Naive thymus-derived CD4-positive, alpha-beta T cell (primary cell): ENCODE measurements at regions of chr3 and their contacts with region 1.

Region 1: DNA sequence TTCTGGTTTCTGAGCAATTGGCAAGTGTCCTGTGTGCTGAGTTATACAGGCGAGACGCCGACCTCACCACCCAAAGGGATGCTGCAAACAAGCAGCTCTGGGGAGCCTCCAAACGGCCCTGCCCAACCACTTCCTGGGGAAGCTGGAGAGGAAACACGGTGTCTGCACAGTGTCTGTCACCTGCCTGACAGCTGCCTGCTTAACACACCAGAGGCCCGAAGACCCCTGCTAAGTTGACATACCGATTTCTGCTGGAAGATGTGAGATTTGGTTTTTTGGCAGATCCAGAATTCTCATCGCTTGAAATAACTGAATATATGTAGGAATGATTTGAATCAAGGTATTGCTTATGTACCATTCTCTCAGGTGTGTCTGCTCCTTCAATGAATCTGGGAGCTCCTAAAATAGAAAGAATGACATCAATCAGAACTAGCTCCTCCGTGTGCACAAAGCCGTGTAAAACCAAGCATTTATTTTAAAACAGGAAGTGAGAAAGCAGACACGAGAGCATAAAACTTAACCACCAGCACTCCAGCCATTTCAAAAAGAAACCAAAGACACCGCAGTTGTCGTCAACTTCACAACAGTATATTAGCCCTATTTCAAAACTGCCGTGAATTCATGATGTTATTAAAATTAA is 27.2 kb downstream of the LRRC2 start:
- DNase-seq: peak; percentile 53 to 92 (median 89)
- ATAC-seq: peak; percentile 94
- H3K4me3 ChIP-seq: peak overlapping the region; percentile 27
- H3K4me3 Mint-ChIP-seq: peak overlapping the region; percentile 46 to 86 (median 74)
- H3K27ac ChIP-seq: peak overlapping the region; percentile 68
- H3K27ac Mint-ChIP-seq: peak overlapping the region; percentile 86 to 97 (median 95)
- H3K4me1 ChIP-seq: peaks cover 27 to 43% of the 10 kb centered on the region in 2 donors
- H3K4me1 Mint-ChIP-seq: peaks cover 19 to 74% (median 56%) of the 10 kb centered on the region in 7 donors
- H3K27me3 ChIP-seq: no peaks in the 10 kb centered on the region
- H3K27me3 Mint-ChIP-seq: peaks cover 0 to 31% (median 6%) of the 10 kb centered on the region in 5 donors

Region 2: GRCh38 chr3:45870099-45870498 is 668.8 kb before region 1 on chr3:
- CTCF ChIA-PET with region 1: no interaction called
- POLR2A ChIA-PET with region 1: no interaction called
- intact Hi-C with region 1: loop called in 1 of 2 experiments (anchors 1 kb)
- DNase-seq: peak in 8 of 9 donors; percentile 33 to 92 (median 88)
- ATAC-seq: peak; percentile 96
- H3K4me3 ChIP-seq: no peak overlapping the region
- H3K4me3 Mint-ChIP-seq: peak overlapping the region in 9 of 10 donors; percentile 0 to 74 (median 45)
- H3K27ac ChIP-seq: no peak overlapping the region
- H3K27ac Mint-ChIP-seq: peak overlapping the region in 8 of 9 donors; percentile 5 to 85 (median 44)
- H3K4me1 ChIP-seq: peaks cover 27 to 28% of the 10 kb centered on the region in 2 donors
- H3K4me1 Mint-ChIP-seq: peaks cover 18 to 58% (median 45%) of the 10 kb centered on the region in 7 donors
- H3K27me3 ChIP-seq: no peaks in the 10 kb centered on the region
- H3K27me3 Mint-ChIP-seq: peaks cover 0 to 70% (median 0%) of the 10 kb centered on the region in 5 donors

Region 3: DNA sequence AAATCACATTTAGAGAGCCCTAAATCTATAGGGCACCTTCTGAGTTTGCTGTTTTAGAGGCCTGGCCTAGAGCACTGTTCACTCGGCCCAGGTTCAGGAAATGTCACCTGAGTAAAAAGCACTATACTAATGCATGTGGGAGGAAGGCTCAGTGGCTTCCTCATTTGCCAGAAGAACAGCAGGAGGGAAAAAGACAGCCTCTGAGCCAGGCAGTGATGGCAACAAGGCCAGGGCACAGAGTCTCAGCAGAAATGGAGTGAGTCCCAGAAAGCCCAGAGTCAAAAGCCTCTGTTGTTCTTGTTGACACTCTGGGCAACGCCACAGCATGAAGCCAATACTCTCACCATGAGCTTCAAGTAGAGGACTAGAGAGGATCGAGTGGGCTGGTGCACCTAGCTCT is 100.1 kb before region 1 on chr3:
- CTCF ChIA-PET with region 1: no interaction called
- POLR2A ChIA-PET with region 1: no interaction called
- intact Hi-C with region 1: no loop called
- DNase-seq: no peak
- ATAC-seq: no peak
- H3K4me3 ChIP-seq: no peak overlapping the region
- H3K4me3 Mint-ChIP-seq: no peak overlapping the region
- H3K27ac ChIP-seq: no peak overlapping the region
- H3K27ac Mint-ChIP-seq: peak overlapping the region in 1 of 9 donors; percentile 17
- H3K4me1 ChIP-seq: peaks cover 12 to 13% of the 10 kb centered on the region in 2 donors
- H3K4me1 Mint-ChIP-seq: peaks cover 16 to 42% (median 28%) of the 10 kb centered on the region in 7 donors
- H3K27me3 ChIP-seq: no peaks in the 10 kb centered on the region
- H3K27me3 Mint-ChIP-seq: peaks cover 0 to 14% (median 0%) of the 10 kb centered on the region in 5 donors

Region 4: GRCh38 chr3:46488735-46489361 is 50.1 kb before region 1 on chr3:
- CTCF ChIA-PET with region 1: interaction called, 75 read pairs
- POLR2A ChIA-PET with region 1: interaction called, 21 read pairs
- intact Hi-C with region 1: loop called (anchors 1 kb)
- DNase-seq: peak; percentile 82 to 92 (median 89)
- ATAC-seq: peak; percentile 99
- H3K4me3 ChIP-seq: peak overlapping the region; percentile 54
- H3K4me3 Mint-ChIP-seq: peak overlapping the region; percentile 38 to 82 (median 68)
- H3K27ac ChIP-seq: no peak overlapping the region
- H3K27ac Mint-ChIP-seq: peak overlapping the region in 6 of 9 donors; percentile 7 to 77 (median 56)
- H3K4me1 ChIP-seq: peaks cover 7 to 15% of the 10 kb centered on the region in 2 donors
- H3K4me1 Mint-ChIP-seq: peaks cover 10 to 21% (median 18%) of the 10 kb centered on the region in 7 donors
- H3K27me3 ChIP-seq: no peaks in the 10 kb centered on the region
- H3K27me3 Mint-ChIP-seq: peaks cover 0 to 31% (median 0%) of the 10 kb centered on the region in 5 donors

Region 5: DNA sequence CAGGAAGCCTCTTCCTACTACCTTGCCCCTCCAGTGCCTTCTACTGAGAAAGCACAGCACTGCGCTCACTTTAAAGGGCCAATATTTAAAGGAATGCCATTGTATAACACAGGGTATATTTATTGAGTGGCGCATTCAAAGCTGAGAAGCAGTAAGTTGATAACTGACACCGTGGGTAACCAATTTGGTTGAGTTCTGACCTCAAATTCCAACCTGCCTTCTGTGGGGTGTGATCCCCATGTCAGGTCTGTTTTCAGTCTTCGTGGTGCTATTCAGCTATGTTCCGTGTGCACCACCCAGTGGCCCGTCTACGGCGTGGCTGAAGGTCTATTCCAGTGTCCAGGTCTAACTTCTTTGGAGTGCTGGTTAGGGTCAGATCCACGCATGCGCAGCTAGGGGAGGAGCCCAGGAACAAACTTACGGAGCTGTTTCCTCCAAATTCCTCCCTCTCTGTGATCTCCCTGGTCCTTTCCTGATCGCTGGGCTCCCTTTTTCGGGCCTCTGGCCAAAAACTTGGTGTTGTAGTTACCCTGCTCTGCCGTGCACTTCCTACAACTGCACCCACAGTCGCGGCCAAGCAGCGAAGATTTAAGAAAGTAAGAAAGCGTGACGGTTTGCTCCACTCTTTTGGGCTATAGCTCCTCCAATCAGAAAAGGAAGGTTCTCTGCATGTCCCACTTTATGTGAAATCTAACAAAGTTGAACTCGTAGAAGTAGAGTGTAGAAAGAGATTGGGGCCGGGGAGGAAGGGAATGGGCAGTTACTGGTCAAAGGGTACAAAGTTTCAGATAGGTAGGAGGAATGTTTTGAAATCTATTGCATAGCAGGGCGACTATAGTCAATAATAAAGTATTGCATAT is 19.5 kb after region 1 on chr3:
- CTCF ChIA-PET with region 1: interaction called, 39 read pairs
- POLR2A ChIA-PET with region 1: interaction called, 13 read pairs
- intact Hi-C with region 1: loop called (anchors 1 kb)
- DNase-seq: peak; percentile 58 to 77 (median 70)
- ATAC-seq: peak; percentile 99
- H3K4me3 ChIP-seq: peak overlapping the region; percentile 37
- H3K4me3 Mint-ChIP-seq: peak overlapping the region; percentile 79 to 89 (median 80)
- H3K27ac ChIP-seq: peak overlapping the region; percentile 11
- H3K27ac Mint-ChIP-seq: peak overlapping the region; percentile 19 to 93 (median 51)
- H3K4me1 ChIP-seq: peaks cover 5 to 12% of the 10 kb centered on the region in 2 donors
- H3K4me1 Mint-ChIP-seq: peaks cover 9 to 20% (median 17%) of the 10 kb centered on the region in 7 donors
- H3K27me3 ChIP-seq: no peaks in the 10 kb centered on the region
- H3K27me3 Mint-ChIP-seq: peaks cover 0 to 72% (median 0%) of the 10 kb centered on the region in 5 donors

Region 6: DNA sequence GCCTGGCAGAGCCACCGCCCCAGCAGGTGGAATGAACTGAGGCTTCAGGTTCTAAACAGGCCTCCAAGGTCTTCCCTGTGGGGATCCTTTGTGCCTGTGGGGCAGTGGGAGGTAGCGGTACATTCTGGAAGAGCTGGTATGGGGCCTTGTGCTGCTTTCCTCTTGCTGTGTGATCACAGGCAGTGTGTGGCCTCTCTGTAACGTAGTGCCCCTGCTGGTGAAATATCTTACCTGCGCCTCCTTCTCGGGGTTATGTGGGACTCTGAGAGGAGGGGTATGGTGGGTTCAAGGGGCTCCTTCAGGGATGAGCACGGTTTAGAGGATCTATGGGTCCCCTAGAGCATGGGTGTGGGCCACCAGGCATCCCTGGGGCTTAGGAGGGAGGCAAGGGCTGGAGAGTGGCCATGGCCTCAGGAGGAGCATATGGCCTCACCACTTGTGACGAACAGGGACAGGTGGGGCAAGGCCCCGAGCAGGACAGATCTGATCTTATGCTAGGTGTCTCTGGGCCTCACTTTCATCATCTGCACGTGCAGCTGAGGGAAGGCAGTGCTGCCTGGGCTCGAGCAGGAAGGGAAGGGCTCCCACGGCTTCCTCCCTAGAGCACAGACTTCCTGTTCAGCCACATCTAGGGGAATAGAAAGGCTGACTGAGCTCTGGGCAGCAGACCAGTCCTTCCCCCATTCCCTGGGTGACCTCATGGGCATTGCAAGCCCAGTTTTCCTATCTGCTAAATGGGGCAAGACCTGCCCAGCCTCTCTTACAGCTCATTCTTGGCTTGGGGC is 156.4 kb after region 1 on chr3:
- CTCF ChIA-PET with region 1: no interaction called
- POLR2A ChIA-PET with region 1: interaction called, 4 read pairs
- intact Hi-C with region 1: loop called in 1 of 2 experiments (anchors 10 kb)
- DNase-seq: peak; percentile 19 to 58 (median 50)
- ATAC-seq: peak; percentile 37
- H3K4me3 ChIP-seq: peak overlapping the region; percentile 6
- H3K4me3 Mint-ChIP-seq: peak overlapping the region; percentile 40 to 94 (median 76)
- H3K27ac ChIP-seq: peak overlapping the region; percentile 75
- H3K27ac Mint-ChIP-seq: peak overlapping the region; percentile 76 to 95 (median 92)
- H3K4me1 ChIP-seq: peaks cover 32 to 78% of the 10 kb centered on the region in 2 donors
- H3K4me1 Mint-ChIP-seq: peaks cover 32 to 94% (median 69%) of the 10 kb centered on the region in 7 donors
- H3K27me3 ChIP-seq: no peaks in the 10 kb centered on the region
- H3K27me3 Mint-ChIP-seq: peaks cover 0 to 39% (median 0%) of the 10 kb centered on the region in 5 donors